ENCODE measurements at regions of chr2 and their contacts with region 1.

Region 1: GRCh38 chr2:6917071-6917760 is at the start of gene RNF144A:
- DNase-seq: no peak
- ATAC-seq: peak; percentile 90 to 91
- H3K4me3 ChIP-seq: peak within 1 kb of the TSS; percentile 62 to 82 (median 70)
- H3K27ac ChIP-seq: peak within 1 kb of the TSS; percentile 54 to 76 (median 65)
- H3K4me1 ChIP-seq: peaks cover 6 to 10% of the 10 kb centered on the region in 2 donors
- H3K27me3 ChIP-seq: no peaks in the 10 kb centered on the region
- CTCF ChIP-seq: peak; percentile 40 to 67 (median 65)
- POLR2A ChIP-seq: peak; percentile 63 to 69
- total RNA-seq, gene RNF144A: 4.9 to 16.2 (median 10.2) TPM

Region 2: DNA sequence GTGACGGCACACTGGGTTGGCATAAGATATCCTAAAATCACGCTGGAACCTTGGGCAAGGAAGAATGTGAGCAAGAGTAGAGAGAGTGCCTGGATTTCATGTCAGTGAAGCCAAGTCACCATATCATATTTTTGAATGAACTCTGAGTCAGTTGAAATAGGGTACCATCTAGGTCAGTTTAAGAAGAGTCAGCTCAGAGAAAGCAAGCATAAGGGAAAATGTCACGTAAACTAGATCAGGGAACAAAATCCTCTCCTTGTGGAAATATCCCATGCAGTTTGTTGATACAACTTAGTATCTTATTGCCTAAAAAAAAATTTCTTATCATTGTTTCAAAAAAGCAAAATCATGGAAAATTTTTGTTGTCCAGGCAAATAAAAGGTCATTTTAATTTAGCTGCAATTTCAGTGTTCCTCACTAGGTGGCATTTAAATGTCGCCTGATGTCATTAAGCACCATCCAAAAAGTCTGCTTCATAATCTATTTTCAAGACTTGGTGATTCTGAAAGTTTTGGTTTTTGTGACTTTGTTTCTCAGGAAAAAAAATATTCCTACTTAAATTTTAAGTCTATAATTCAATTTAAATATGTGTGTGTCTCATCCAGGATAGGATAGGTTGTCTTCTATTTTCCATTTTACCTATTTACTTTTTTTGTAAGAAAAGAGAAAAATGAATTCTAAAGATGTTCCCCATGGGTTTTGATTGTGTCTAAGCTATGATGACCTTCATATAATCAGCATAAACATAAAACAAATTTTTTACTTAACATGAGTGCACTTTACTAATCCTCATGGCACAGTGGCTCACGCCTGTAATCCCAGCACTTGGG is 20.1 kb before region 1 on chr2:
- in situ Hi-C with region 1: no loop called
- intact Hi-C with region 1: loop called (anchors 2 kb)
- DNase-seq: no peak
- ATAC-seq: peak; percentile 66
- H3K4me3 ChIP-seq: no peak overlapping the region
- H3K27ac ChIP-seq: no peak overlapping the region
- H3K4me1 ChIP-seq: no peaks in the 10 kb centered on the region
- H3K27me3 ChIP-seq: no peaks in the 10 kb centered on the region
- CTCF ChIP-seq: peak; percentile 56 to 81 (median 68)
- POLR2A ChIP-seq: no peak